ENCODE measurements at regions of chr6 and their contacts with region 1.

Region 1: GRCh38 chr6:139577763-139578604 is 203.5 kb upstream of the CITED2 start:
- DNase-seq: peak; percentile 83
- H3K4me3 ChIP-seq: no peak overlapping the region
- H3K27ac ChIP-seq: peak overlapping the region; percentile 82
- H3K4me1 ChIP-seq: peaks cover 22% of the 10 kb centered on the region
- H3K27me3 ChIP-seq: no peaks in the 10 kb centered on the region
- CTCF ChIP-seq: no peak

Region 2: DNA sequence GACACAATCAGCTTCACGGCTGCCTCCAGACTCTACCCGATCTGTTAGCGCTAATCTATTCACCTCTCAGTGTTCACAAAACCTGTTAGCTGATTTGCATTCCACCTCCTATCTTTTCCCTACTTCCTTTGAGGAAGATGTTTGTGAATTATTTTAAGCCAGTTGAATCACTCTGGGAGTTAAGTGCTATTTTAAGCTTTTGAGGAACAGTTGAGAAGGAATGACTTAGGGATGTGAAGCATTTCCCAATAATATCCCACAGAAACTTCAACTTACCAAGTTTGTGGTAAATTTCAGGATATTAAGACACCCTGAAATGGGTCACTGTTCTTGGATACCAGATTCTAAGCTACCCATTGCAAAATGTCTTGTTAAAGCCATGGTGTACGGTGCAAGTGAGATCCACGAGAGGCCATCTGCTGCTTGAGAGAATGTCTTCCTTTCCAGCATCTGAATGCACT is 58.4 kb before region 1 on chr6:
- CTCF ChIA-PET with region 1: no interaction called
- dilution Hi-C with region 1: no loop called
- in situ Hi-C with region 1: no loop called
- intact Hi-C with region 1: loop called (anchors 5 kb)
- DNase-seq: no peak
- H3K4me3 ChIP-seq: no peak overlapping the region
- H3K27ac ChIP-seq: peak overlapping the region; percentile 44
- H3K4me1 ChIP-seq: peaks cover 27% of the 10 kb centered on the region
- H3K27me3 ChIP-seq: no peaks in the 10 kb centered on the region
- CTCF ChIP-seq: no peak

Measured in mammary epithelial cell (primary cell).